Aorta (tissue), 5 donors: ENCODE measurements at regions of chr15 and their contacts with region 1.

Region 1: GRCh38 chr15:22980189-22981050 is at the start of gene CYFIP1:
- DNase-seq: peak; percentile 92 to 96
- ATAC-seq: peak; percentile 96
- H3K4me3 ChIP-seq: peak within 1 kb of the TSS; percentile 94 to 97
- H3K27ac ChIP-seq: peak within 1 kb of the TSS; percentile 52 to 55
- H3K4me1 ChIP-seq: peaks cover 0 to 2% of the 10 kb centered on the region in 2 donors
- H3K27me3 ChIP-seq: no peaks in the 10 kb centered on the region
- total RNA-seq, gene CYFIP1: 160 to 172 TPM

Region 2: GRCh38 chr15:22838292-22839042 is 142.0 kb before region 1 on chr15 and contains the start of gene NIPA2:
- intact Hi-C with region 1: loop called in 1 of 2 experiments (anchors 2 kb)
- DNase-seq: peak; percentile 99 to 100
- ATAC-seq: peak; percentile 99
- H3K4me3 ChIP-seq: peak within 1 kb of the TSS; percentile 67 to 85
- H3K27ac ChIP-seq: peak within 1 kb of the TSS; percentile 63 to 83
- H3K4me1 ChIP-seq: no peaks in the 10 kb centered on the region
- H3K27me3 ChIP-seq: no peaks in the 10 kb centered on the region
- total RNA-seq, gene NIPA2: 28.3 to 30.1 TPM

Region 3: DNA sequence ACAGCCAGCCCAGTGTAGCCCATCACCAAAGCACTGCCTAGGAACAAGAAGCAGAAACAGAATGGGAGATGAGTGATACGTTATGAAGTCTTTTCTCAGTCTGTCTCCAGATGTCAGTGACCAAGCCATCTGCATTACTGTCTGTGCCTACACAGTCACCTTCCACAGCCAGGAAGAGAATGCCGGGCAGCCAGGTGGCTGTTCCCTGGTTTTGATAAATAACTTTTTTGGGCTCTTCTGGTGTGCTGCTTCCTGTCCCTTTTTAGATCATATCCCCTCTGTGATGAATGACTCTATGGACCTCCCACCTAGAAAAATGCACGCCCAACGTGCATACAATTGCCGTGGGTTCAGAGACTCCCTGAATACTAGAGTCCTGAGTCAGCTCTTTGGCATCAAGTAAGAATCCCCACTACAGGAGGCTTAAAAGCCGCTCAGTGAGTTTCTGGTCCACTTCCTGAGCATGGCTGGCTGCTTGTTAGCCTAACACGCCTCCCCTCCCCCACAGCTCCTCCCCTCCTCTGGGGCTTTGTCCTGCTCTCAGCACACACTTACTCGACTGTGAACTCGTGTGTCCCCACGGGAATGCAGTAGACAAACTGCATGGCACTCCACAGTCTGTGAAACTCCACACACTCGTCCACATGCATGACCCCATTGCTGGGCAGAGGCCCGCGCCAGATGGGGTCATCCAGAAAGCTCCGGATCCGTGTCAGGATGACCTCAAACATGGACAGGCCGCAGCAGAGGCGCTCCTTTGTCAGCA is 107.3 kb before region 1 on chr15:
- intact Hi-C with region 1: loop called in 1 of 2 experiments (anchors 10 kb)
- DNase-seq: no peak
- ATAC-seq: no peak
- H3K4me3 ChIP-seq: no peak overlapping the region
- H3K27ac ChIP-seq: no peak overlapping the region
- H3K4me1 ChIP-seq: no peaks in the 10 kb centered on the region
- H3K27me3 ChIP-seq: no peaks in the 10 kb centered on the region

Region 4: GRCh38 chr15:22930782-22931484 is 49.5 kb before region 1 on chr15:
- intact Hi-C with region 1: loop called in 1 of 2 experiments (anchors 5 kb)
- DNase-seq: peak in 1 of 2 donors; percentile 68
- ATAC-seq: peak; percentile 49
- H3K4me3 ChIP-seq: no peak overlapping the region
- H3K27ac ChIP-seq: peak overlapping the region in 1 of 2 donors; percentile 13
- H3K4me1 ChIP-seq: no peaks in the 10 kb centered on the region
- H3K27me3 ChIP-seq: no peaks in the 10 kb centered on the region

Region 5: GRCh38 chr15:22949074-22949547 is 31.3 kb before region 1 on chr15:
- intact Hi-C with region 1: loop called (anchors 2 to 5 kb)
- DNase-seq: peak; percentile 71 to 92
- ATAC-seq: peak; percentile 83
- H3K4me3 ChIP-seq: no peak overlapping the region
- H3K27ac ChIP-seq: peak overlapping the region in 1 of 2 donors; percentile 35
- H3K4me1 ChIP-seq: no peaks in the 10 kb centered on the region
- H3K27me3 ChIP-seq: no peaks in the 10 kb centered on the region

Region 6: DNA sequence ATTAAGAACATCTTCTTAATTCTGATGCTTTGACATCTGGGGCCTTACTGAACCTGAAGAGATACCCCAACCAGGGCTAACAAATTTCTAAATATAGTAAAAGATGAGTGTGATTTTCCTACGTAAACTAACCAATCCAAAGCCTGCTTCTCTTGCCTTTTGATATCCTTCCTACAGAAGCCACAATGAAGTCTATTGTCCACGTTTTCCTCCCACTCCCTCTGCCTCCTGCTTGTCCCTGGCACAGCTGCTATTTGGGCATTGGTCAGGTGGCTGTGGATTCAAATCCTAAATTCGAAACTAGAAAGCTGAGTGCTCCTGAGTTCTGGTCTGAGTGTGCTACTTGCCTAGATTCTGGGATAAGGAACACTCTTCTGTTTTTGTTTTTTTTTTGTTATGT is 567.7 kb after region 1 on chr15:
- intact Hi-C with region 1: no loop called
- DNase-seq: no peak
- ATAC-seq: no peak
- H3K4me3 ChIP-seq: no peak overlapping the region
- H3K27ac ChIP-seq: no peak overlapping the region
- H3K4me1 ChIP-seq: no peaks in the 10 kb centered on the region
- H3K27me3 ChIP-seq: no peaks in the 10 kb centered on the region